ENCODE measurements at regions of chr21 and their contacts with region 1.

Region 1: DNA sequence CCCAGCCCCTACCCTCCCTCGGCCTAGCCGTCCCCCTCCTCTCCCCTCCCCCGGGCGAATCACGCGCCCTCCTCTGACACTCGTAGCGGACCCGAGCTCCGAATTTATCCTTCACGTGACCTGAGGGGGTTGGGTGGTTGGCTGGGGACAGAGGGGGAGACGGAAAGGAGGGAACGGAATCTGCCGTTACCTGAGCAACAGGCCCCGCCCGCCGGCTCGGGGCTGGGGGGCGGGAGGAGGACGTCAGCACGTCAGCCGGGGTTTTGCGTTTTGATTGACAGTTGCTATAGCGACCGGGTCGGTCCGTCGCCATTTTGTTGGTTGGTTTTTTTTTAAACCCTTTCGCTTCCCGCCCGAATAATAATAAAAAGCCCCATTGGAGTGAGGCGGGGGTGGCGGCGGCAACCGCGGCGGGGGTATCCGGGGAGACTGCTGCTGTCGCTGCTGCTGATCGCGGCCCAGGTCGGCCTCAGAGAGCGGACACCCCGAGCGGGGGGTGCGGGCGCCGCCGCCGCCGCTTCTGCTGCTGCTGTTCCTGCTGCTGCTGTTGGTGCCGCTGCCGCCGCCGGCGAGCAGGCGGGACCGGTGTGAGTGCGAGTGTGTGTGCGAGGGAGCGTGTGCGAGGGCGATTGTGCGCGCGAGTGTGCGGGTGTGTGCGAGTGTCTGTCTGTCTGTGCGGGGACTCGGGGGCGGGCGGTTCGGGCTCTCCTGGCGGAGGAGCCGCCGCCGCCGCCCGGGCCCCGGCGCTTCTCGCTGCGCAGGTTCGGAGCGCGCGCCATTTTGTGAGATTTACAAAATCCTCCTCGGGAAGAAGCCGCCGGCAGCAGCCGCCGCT is at the start of gene DYRK1A:
- DNase-seq: peak; percentile 97 to 99
- H3K4me3 ChIP-seq: peak within 1 kb of the TSS; percentile 89 to 97
- H3K27ac ChIP-seq: peak within 1 kb of the TSS; percentile 100
- H3K4me1 ChIP-seq: peaks cover 4 to 19% of the 10 kb centered on the region in 2 donors
- H3K27me3 ChIP-seq: no peaks in the 10 kb centered on the region
- CTCF ChIP-seq: peak in 1 of 3 experiments; percentile 5
- total RNA-seq, gene DYRK1A: 34.4 TPM

Region 2: GRCh38 chr21:37072988-37073416 is 293.7 kb before region 1 on chr21 and contains the starts of genes PIGP and TTC3:
- intact Hi-C with region 1: loop called (anchors 2 kb)
- DNase-seq: peak; percentile 73 to 96
- H3K4me3 ChIP-seq: peak within 1 kb of the TSS; percentile 84 to 96
- H3K27ac ChIP-seq: peak within 1 kb of the TSS; percentile 95 to 100
- H3K4me1 ChIP-seq: peaks cover 0 to 15% of the 10 kb centered on the region in 2 donors
- H3K27me3 ChIP-seq: no peaks in the 10 kb centered on the region
- CTCF ChIP-seq: no peak
- total RNA-seq, gene PIGP: 0.64 TPM
- total RNA-seq, gene TTC3: 70.7 TPM

Region 3: DNA sequence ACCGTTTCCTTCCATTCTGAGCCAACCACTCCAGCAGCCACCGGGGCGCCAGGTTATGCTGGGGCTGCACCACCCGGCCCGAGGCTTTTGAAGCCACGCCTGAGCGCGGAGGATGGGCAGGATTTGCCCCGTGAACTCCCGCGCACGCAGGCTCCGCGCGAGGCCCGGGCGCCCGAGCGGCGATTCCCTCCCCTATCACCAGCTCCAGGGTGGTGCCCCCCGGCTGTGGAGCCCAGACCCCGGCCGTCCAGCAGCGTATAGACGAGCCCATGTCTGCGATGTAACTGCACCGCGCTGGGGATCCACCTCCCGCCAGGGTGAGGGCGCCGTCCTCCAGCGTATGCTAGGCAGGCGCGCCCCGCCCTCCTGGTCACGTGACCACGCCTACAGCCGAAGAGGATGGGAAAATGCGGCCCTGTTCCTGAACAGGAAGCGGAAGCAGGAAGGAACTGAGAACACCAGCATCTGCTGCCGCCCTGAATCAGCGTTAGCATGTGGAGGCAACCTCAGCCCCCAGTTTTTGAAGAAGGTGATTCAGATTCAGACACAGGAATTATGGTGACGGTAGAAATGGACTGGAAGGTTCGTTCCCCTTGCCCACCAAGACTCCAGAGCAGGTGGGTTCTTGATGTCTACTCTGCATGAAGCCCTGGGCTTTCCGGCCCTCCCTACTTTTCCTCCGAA is 145.6 kb before region 1 on chr21:
- intact Hi-C with region 1: loop called (anchors 1 kb)
- DNase-seq: peak; percentile 88 to 97
- H3K4me3 ChIP-seq: peak overlapping the region; percentile 54 to 68
- H3K27ac ChIP-seq: peak overlapping the region; percentile 55 to 72
- H3K4me1 ChIP-seq: peaks cover 0 to 6% of the 10 kb centered on the region in 2 donors
- H3K27me3 ChIP-seq: no peaks in the 10 kb centered on the region
- CTCF ChIP-seq: peak in 2 of 3 experiments; percentile 29 to 53

Region 4: GRCh38 chr21:37338671-37339551 is 27.8 kb before region 1 on chr21:
- intact Hi-C with region 1: loop called (anchors 1 kb)
- DNase-seq: peak in 1 of 2 donors; percentile 74
- H3K4me3 ChIP-seq: no peak overlapping the region
- H3K27ac ChIP-seq: peak overlapping the region; percentile 86 to 95
- H3K4me1 ChIP-seq: peaks cover 0 to 21% of the 10 kb centered on the region in 2 donors
- H3K27me3 ChIP-seq: no peaks in the 10 kb centered on the region
- CTCF ChIP-seq: no peak

Region 5: DNA sequence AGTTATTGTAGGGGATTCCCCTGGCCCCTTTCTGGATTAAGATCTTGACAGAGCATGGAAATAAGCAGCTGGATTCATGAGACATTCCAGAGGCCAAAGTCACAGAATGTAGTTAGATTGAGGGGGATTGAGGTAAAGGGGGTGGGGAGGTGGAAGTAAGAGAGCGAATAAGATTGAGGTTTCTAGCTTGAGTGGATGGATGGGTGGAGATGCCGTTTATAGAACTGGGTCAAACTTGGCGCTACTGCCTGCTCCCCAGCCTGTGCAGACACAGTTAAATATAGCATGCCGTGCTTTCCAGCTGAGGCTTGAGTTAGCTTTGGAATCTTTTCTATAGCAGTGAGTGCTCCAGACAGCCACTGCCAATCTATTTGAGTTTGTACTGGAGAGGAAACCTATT is 85.5 kb after region 1 on chr21:
- intact Hi-C with region 1: loop called (anchors 5 kb)
- DNase-seq: peak in 1 of 2 donors; percentile 85
- H3K4me3 ChIP-seq: peak overlapping the region in 1 of 2 donors; percentile 10
- H3K27ac ChIP-seq: peak overlapping the region; percentile 70 to 72
- H3K4me1 ChIP-seq: peaks cover 10 to 63% of the 10 kb centered on the region in 2 donors
- H3K27me3 ChIP-seq: no peaks in the 10 kb centered on the region
- CTCF ChIP-seq: no peak

Region 6: DNA sequence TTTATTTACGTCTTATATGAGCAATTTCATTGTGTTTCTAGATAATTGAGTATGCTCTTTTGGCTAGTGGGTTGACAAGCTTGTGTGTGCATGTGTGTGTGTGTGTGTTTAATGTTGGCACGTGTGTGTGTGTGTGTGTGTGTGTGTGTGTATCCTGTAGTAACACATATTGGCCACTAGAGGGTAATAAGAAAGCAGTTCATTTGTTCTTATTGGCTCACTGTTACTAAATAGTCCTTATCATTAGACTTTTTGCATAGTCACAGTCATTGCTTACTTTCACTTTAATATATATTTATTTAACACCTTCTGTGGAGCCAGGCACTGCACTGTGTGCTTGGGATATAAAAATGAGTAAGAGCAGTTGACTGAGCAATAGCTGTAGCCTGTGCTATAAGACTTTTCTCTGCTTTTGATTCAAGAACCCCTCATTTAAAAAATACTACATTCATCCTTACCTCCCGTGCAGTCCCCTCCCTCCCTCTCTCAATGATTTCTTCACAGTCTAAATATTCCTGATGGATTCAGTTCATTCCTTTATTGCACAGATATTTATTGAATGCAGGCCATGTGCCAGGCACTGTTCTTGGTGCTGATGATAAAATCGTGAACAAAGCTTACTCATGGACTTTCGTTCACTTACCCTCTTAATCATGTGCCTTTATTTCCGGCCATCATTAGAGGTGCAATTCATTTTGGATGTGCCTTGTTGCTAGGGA is 96.5 kb after region 1 on chr21:
- intact Hi-C with region 1: no loop called
- DNase-seq: no peak
- H3K4me3 ChIP-seq: peak overlapping the region in 1 of 2 donors; percentile 20
- H3K27ac ChIP-seq: peak overlapping the region in 1 of 2 donors; percentile 39
- H3K4me1 ChIP-seq: peaks cover 9 to 62% of the 10 kb centered on the region in 2 donors
- H3K27me3 ChIP-seq: no peaks in the 10 kb centered on the region
- CTCF ChIP-seq: peak; percentile 31 to 48 (median 44)

Region 7: DNA sequence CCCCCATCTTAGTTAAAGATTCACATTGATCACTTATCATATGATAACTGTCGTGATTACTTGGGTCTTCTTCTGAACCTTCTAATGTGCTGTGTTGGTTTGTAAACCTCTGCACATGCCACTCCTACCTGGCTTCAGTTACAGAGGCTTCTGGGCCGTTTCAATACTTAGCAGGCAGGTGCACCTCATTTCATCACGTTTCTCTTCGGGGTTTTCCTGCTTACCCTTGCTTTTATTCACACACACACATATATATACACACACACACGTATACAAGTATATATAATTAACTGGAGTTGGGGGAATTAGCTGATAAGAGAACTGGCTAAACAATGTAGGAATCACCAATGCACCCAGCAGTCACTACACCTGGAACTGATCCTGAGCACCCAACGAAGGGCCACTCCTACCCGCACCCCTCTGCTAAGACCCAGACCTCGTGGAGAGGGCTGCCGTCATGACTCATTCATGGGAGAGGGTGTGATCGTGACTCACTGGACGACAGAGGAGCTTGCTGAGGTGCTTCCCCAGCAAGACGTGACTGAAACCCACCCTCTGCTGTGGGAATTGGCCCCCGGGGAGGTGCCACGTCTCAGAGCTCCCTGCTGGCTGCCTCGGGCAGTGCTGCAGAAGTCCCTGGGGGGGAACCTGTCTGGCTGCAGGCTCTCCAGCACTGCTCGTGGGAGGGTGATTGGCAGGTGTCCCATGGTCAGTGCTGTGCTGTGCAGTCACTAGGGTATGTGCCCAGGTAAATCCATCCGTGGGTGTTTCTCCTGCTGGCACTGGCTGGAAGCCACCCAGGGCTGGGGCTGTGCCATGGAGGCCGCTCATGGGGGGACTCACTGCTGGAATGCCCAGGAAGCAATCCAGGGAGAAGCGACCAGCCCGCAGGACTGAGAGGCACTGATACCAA is 166.4 kb after region 1 on chr21:
- intact Hi-C with region 1: no loop called
- DNase-seq: no peak
- H3K4me3 ChIP-seq: no peak overlapping the region
- H3K27ac ChIP-seq: no peak overlapping the region
- H3K4me1 ChIP-seq: peaks cover 3 to 14% of the 10 kb centered on the region in 2 donors
- H3K27me3 ChIP-seq: no peaks in the 10 kb centered on the region
- CTCF ChIP-seq: no peak

Region 8: DNA sequence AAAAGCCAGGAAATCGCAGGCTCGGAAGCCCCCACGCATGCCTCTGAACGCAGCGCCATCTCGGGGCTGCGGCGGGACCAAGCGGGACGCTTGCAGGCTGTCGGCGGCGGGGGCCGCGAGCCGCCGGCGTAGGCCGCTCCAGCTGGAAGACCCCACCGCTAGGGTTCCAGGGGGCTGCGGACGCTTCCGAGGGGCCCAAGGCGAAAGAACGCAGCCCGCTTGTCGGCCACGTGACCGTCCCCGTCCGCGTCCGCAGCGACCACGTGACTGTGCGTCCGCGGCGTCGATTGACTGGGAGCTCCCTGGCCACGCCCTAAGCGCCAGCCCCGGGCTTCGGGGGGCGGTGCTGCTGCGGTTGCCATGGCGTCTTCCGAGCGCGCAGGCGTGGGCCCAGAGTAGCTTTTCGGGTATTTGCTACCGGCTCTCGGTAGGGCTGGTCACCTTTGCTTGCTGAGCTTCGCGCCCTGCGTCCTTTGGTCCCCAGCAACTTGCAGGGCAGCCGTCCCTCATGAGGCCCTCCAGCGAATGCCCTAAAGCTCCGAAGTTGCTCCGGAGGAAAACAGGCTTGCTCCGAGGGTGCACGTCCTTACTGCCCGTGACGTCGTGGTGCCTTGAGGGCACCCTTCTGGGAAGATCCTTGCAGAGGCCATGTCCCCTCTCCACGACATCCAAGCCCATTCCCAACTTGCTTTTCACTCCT is 197.1 kb after region 1 on chr21:
- intact Hi-C with region 1: loop called (anchors 1 kb)
- DNase-seq: peak; percentile 67 to 94
- H3K4me3 ChIP-seq: peak overlapping the region; percentile 66 to 78
- H3K27ac ChIP-seq: peak overlapping the region; percentile 94 to 97
- H3K4me1 ChIP-seq: peaks cover 3 to 13% of the 10 kb centered on the region in 2 donors
- H3K27me3 ChIP-seq: no peaks in the 10 kb centered on the region
- CTCF ChIP-seq: peak; percentile 46 to 64 (median 57)

Region 9: GRCh38 chr21:37658817-37659458 is 292.2 kb after region 1 on chr21:
- intact Hi-C with region 1: loop called (anchors 5 kb)
- DNase-seq: peak; percentile 35 to 82
- H3K4me3 ChIP-seq: peak overlapping the region in 1 of 2 donors; percentile 26
- H3K27ac ChIP-seq: peak overlapping the region; percentile 67 to 81
- H3K4me1 ChIP-seq: peaks cover 5 to 14% of the 10 kb centered on the region in 2 donors
- H3K27me3 ChIP-seq: no peaks in the 10 kb centered on the region
- CTCF ChIP-seq: peak; percentile 3 to 39 (median 37)

Measured in ascending aorta (tissue), 2 donors.